CD4-positive, alpha-beta T cell (primary cell): ENCODE measurements at regions of chr17 and their contacts with region 1.

Region 1: DNA sequence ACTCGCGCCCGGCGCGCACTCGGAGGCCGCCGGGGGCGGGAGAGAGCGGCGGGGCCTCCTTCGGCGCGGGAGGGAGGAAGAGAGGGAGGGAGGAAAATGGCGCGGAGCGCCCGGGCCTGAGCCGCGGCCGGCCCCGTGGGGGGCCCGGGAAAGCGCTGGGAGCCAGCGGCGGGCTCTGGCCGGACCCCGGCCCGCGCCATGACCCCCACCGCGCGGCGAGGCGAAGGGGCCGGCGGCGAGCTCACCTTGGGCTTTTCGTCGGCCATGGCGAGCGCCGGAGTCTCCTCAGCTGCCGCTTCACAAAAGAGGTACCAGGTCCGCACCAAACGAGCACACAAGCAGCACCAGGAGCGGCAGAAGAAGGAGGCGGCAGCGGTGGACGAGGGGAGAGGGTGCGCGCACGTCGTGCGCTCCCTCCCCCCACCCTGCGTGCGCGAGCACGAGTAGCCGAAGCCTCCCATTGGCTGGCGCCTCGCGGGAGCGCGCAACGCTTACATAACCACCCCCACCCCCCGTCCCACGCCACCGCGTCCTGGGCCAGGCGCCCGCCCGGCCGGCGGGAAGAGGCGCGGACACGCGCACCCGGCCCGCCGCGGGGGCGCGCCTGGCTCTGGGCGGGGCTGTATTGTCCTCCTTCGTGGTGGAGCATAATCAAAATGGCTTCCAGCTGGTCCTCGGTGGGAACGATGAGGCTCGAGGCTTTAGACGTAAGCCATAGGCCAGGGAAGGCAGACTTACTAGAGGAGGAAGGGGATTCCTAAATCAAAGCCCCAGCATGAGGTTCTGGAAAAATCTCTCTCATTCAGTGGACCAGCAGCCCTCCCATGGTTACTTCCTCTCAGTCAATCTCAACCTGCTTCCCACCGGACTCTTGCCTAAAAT is at the start of gene SUMO2:
- DNase-seq: peak; percentile 92 to 98 (median 96)
- ATAC-seq: peak; percentile 79
- H3K4me3 ChIP-seq: peak within 1 kb of the TSS; percentile 96
- H3K4me3 Mint-ChIP-seq: peak within 1 kb of the TSS; percentile 92
- H3K27ac ChIP-seq: peak within 1 kb of the TSS; percentile 74 to 94
- H3K27ac Mint-ChIP-seq: peak within 1 kb of the TSS; percentile 87
- H3K4me1 ChIP-seq: peaks cover 40% of the 10 kb centered on the region
- H3K4me1 Mint-ChIP-seq: peaks cover 47% of the 10 kb centered on the region
- H3K27me3 ChIP-seq: no peaks in the 10 kb centered on the region
- H3K27me3 Mint-ChIP-seq: no peaks in the 10 kb centered on the region
- CTCF ChIP-seq: peak; percentile 25
- total RNA-seq, gene SUMO2: 207 to 228 TPM

Region 2: GRCh38 chr17:74442670-74443515 is 739.9 kb before region 1 on chr17:
- CTCF ChIA-PET with region 1: no interaction called
- POLR2A ChIA-PET with region 1: no interaction called
- intact Hi-C with region 1: no loop called
- DNase-seq: peak in 3 of 14 experiments; percentile 30 to 64 (median 58)
- ATAC-seq: peak; percentile 67
- H3K4me3 ChIP-seq: peak overlapping the region; percentile 15
- H3K4me3 Mint-ChIP-seq: no peak overlapping the region
- H3K27ac ChIP-seq: no peak overlapping the region
- H3K27ac Mint-ChIP-seq: no peak overlapping the region
- H3K4me1 ChIP-seq: peaks cover 21% of the 10 kb centered on the region
- H3K4me1 Mint-ChIP-seq: no peaks in the 10 kb centered on the region
- H3K27me3 ChIP-seq: peaks cover 5% of the 10 kb centered on the region in 2 experiments
- H3K27me3 Mint-ChIP-seq: peaks cover 14% of the 10 kb centered on the region
- CTCF ChIP-seq: no peak

Region 3: GRCh38 chr17:74748529-74749365 is 434.1 kb before region 1 on chr17 and contains the start of gene NHERF1:
- CTCF ChIA-PET with region 1: no interaction called
- POLR2A ChIA-PET with region 1: no interaction called
- intact Hi-C with region 1: loop called in 1 of 2 experiments (anchors 5 kb)
- DNase-seq: peak in 13 of 14 experiments; percentile 83 to 97 (median 94)
- ATAC-seq: peak; percentile 82
- H3K4me3 ChIP-seq: peak within 1 kb of the TSS; percentile 98
- H3K4me3 Mint-ChIP-seq: peak within 1 kb of the TSS; percentile 92
- H3K27ac ChIP-seq: peak within 1 kb of the TSS; percentile 48 to 84
- H3K27ac Mint-ChIP-seq: peak within 1 kb of the TSS; percentile 94
- H3K4me1 ChIP-seq: peaks cover 74% of the 10 kb centered on the region
- H3K4me1 Mint-ChIP-seq: peaks cover 74% of the 10 kb centered on the region
- H3K27me3 ChIP-seq: no peaks in the 10 kb centered on the region
- H3K27me3 Mint-ChIP-seq: no peaks in the 10 kb centered on the region
- CTCF ChIP-seq: no peak
- total RNA-seq, gene NHERF1: 68.4 to 72.4 TPM

Region 4: GRCh38 chr17:75059369-75060345 is 123.2 kb before region 1 on chr17:
- CTCF ChIA-PET with region 1: no interaction called
- POLR2A ChIA-PET with region 1: interaction called, 3 read pairs
- intact Hi-C with region 1: loop called in 1 of 2 experiments (anchors 5 kb)
- DNase-seq: peak in 4 of 14 experiments; percentile 21 to 59 (median 48)
- ATAC-seq: peak; percentile 92
- H3K4me3 ChIP-seq: no peak overlapping the region
- H3K4me3 Mint-ChIP-seq: no peak overlapping the region
- H3K27ac ChIP-seq: no peak overlapping the region
- H3K27ac Mint-ChIP-seq: peak overlapping the region; percentile 61
- H3K4me1 ChIP-seq: peaks cover 6% of the 10 kb centered on the region
- H3K4me1 Mint-ChIP-seq: peaks cover 21% of the 10 kb centered on the region
- H3K27me3 ChIP-seq: no peaks in the 10 kb centered on the region
- H3K27me3 Mint-ChIP-seq: no peaks in the 10 kb centered on the region
- CTCF ChIP-seq: peak; percentile 39

Region 5: DNA sequence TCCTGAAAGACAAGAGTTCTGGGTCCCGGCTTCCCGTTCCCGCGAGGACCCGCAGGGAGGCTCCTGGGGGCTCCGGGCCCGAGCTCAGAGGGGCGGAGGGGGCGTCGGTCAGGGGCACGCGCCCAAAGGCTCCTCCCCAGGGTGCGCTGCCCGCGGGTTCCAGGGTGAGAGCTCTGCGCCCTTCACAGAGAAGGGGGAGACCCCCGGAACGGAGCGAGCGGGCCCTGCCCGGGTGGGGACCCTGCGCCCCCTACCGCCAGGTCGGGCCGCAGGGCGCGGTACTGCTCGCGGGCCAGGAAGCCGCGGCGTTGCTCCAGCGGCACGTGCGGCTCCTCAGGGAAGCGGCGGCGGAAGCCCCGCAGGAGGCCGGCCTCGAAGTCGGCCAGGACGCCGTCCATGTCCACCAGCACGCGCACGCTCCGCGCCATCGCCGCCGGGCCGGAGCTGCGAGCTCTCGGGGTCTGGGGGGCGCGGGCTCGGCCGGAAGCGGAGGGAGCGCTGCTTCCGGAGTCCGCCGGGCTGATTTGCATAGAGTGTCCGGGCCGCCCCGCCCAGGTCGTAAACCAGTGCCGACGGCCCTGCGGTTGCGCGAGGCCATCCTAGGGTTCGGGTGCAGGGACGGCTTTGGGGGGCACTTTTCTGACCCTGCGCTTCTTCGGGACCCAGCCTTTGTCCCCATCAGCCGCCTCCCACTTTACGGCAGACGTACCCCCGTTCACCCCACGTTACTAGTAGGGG is 51.4 kb before region 1 on chr17 and contains the start of gene NT5C:
- CTCF ChIA-PET with region 1: interaction called, 4 read pairs
- POLR2A ChIA-PET with region 1: interaction called, 8 read pairs
- intact Hi-C with region 1: loop called in 1 of 2 experiments (anchors 5 kb)
- DNase-seq: peak in 10 of 14 experiments; percentile 44 to 78 (median 56)
- ATAC-seq: peak; percentile 72
- H3K4me3 ChIP-seq: peak within 1 kb of the TSS; percentile 83
- H3K4me3 Mint-ChIP-seq: peak within 1 kb of the TSS; percentile 88
- H3K27ac ChIP-seq: peak within 1 kb of the TSS; percentile 45 to 55
- H3K27ac Mint-ChIP-seq: peak within 1 kb of the TSS; percentile 70
- H3K4me1 ChIP-seq: peaks cover 21% of the 10 kb centered on the region
- H3K4me1 Mint-ChIP-seq: peaks cover 7% of the 10 kb centered on the region
- H3K27me3 ChIP-seq: no peaks in the 10 kb centered on the region
- H3K27me3 Mint-ChIP-seq: no peaks in the 10 kb centered on the region
- CTCF ChIP-seq: peak; percentile 70
- total RNA-seq, gene NT5C: 14.1 to 16.1 TPM

Region 6: GRCh38 chr17:75154195-75155106 is 28.4 kb before region 1 on chr17 and contains the start of gene JPT1:
- CTCF ChIA-PET with region 1: interaction called, 3 read pairs
- POLR2A ChIA-PET with region 1: interaction called, 9 read pairs
- intact Hi-C with region 1: loop called in 1 of 2 experiments (anchors 1 kb)
- DNase-seq: peak; percentile 94 to 99 (median 98)
- ATAC-seq: peak; percentile 97
- H3K4me3 ChIP-seq: peak within 1 kb of the TSS; percentile 96
- H3K4me3 Mint-ChIP-seq: peak within 1 kb of the TSS; percentile 97
- H3K27ac ChIP-seq: peak within 1 kb of the TSS; percentile 45 to 48
- H3K27ac Mint-ChIP-seq: peak within 1 kb of the TSS; percentile 79
- H3K4me1 ChIP-seq: peaks cover 32% of the 10 kb centered on the region
- H3K4me1 Mint-ChIP-seq: peaks cover 32% of the 10 kb centered on the region
- H3K27me3 ChIP-seq: no peaks in the 10 kb centered on the region
- H3K27me3 Mint-ChIP-seq: no peaks in the 10 kb centered on the region
- CTCF ChIP-seq: no peak
- total RNA-seq, gene JPT1: 21.3 to 25.5 TPM

Region 7: DNA sequence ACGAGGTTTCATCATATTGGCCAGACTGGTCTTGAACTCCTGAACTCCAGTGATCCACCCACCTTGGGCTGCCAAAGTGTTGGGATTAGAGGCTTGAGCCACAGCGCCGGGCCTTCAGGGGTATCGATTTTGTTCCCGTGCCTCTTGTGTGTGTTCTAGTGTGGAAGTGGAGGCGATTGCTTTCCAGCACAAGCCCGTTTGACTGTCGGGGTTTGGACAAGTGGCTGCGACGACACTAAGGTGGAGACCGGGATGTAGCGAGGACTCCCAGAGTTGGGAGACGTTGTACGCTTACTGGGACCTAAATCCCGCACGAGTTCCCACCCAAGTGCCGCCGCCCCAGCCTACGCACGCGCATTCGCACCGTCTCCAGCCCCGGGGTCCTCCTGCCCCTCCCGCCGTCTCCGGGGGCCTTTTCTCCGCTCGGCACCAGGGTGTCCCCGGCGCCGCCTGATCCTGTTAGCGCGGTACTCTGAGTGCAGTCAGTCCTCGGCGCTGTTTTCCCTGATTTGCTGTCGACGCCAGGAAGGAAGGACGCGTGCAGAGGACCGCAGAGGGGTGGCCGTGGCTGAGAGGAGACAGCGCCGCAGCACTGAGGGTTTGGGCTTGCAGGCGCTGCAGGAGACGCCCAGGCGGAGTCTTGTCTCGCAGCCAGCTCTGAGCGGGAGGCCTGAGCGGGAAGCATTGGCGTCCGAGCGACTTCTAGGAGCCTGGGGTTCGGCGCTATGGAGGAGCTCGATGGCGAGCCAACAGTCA is 22.4 kb after region 1 on chr17 and contains the start of gene NUP85:
- CTCF ChIA-PET with region 1: interaction called, 9 read pairs
- POLR2A ChIA-PET with region 1: interaction called, 8 read pairs
- intact Hi-C with region 1: loop called in 1 of 2 experiments (anchors 2 kb)
- DNase-seq: peak; percentile 87 to 95 (median 90)
- ATAC-seq: peak; percentile 89
- H3K4me3 ChIP-seq: peak within 1 kb of the TSS; percentile 95
- H3K4me3 Mint-ChIP-seq: peak within 1 kb of the TSS; percentile 96
- H3K27ac ChIP-seq: peak within 1 kb of the TSS; percentile 91 to 94
- H3K27ac Mint-ChIP-seq: peak within 1 kb of the TSS; percentile 95
- H3K4me1 ChIP-seq: peaks cover 28% of the 10 kb centered on the region
- H3K4me1 Mint-ChIP-seq: peaks cover 27% of the 10 kb centered on the region
- H3K27me3 ChIP-seq: no peaks in the 10 kb centered on the region
- H3K27me3 Mint-ChIP-seq: no peaks in the 10 kb centered on the region
- CTCF ChIP-seq: no peak
- total RNA-seq, gene NUP85: 84.7 to 89.2 TPM